Lower leg skin (tissue), 4 donors: ENCODE measurements at regions of chr3 and their contacts with region 1.

Region 1: DNA sequence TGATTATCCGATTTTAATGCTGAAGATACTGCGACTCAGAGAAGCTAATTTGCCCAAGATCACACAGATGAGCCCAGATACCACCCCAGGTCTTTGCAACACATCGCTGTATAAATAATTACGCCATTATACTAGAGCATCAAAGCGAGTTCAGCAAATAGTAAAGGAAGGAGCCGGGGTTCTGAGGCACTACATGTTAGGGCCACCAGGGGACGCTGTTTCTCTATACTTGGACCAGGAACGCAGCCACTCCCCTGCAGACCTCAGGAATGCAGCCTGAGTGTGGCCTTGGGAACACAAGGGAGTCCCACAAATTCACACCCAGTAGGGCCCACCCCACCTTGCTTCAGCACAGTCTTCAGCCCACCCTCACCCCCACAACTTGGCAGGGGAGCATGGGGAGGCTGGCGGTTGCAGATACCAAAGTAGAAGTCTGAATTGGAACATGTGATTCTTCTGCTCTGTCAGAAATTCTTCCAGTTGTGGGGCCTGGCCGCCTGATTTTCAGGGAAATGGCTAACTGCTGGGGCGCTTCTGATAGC is 57.8 kb upstream of the RYK start:
- DNase-seq: peak; percentile 90 to 98
- H3K4me3 ChIP-seq: no peak overlapping the region
- CTCF ChIP-seq: peak in 1 of 3 donors; percentile 94
- POLR2A ChIP-seq: no peak

Region 2: DNA sequence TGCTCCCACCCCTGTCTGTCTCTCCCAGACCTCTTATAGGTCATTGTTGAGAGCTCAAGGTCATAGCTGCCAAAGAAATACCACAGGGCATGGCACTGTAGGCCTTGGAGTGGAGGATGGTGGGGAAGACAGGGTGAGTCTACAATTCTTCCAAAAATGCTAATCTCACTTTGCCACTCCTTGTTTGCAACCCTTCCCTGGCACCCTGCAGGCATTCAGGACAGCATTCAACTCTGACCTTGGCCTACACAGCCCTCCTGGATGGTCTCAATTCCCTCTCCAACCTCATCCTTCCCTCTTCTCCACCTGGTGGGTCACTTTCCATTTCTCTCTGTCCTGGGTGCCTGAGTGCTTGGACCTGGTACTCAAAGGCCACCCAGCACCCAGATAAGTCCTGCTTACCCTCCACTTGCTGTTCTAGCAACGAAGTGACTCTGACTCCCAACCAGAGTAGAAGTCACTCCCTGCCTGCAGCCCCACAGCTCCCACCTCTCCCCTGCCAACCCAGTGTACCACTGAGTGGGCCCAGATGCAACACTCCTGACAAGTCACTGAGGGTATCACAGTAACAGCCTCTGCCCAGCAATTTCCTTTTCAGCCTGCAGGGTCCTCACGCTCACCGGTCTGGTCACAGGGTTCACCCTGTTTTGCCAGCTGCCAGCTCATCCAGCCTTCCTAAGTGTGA is 29.2 kb after region 1 on chr3:
- intact Hi-C with region 1: no loop called
- DNase-seq: peak in 1 of 2 donors; percentile 54
- H3K4me3 ChIP-seq: no peak overlapping the region
- CTCF ChIP-seq: no peak
- POLR2A ChIP-seq: no peak

Region 3: DNA sequence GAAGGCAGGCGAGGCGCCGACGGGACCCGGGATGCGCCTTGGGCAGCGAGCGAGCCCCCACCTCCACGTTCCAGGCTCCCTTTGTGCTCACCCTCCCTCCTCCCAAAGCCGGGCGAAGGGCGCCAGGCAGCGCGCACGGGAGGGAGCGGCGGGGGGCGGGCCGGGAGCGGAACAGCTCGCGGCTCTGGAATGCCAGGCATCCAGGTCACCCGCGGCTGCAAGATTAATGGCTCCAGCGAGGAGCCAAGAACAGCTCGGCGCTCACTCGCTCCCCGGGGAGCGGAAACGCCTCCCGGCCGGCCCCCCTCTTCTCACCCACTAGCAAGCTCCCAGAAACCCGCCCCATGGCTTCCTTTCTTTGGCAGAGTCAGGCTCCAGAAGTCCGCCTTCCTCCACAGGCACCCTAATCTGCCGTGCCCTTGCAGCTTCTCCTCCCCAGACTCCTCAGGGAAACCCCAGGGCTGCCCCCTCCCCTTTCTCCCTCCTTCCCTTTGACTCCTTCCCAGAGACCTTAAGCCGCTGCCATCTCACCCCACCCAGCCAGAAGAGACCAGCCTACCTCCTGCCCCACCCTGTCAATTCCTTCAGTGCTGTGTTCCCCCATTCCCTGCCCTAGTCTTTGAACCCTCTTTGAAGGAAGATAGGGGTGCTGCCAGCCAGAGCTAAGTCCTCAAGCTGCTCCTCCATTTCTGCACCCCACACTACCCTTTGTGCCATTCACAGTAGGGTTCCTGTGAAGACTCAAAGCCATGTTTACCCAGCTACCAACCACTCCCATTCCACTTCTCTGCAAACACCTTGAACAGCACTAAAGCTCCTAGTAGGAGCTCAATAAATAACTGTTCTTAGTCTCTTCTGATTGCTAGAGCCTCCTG is 55.9 kb after region 1 on chr3:
- intact Hi-C with region 1: loop called (anchors 5 kb)
- DNase-seq: peak; percentile 93 to 98
- H3K4me3 ChIP-seq: no peak overlapping the region
- CTCF ChIP-seq: no peak
- POLR2A ChIP-seq: no peak

Region 4: DNA sequence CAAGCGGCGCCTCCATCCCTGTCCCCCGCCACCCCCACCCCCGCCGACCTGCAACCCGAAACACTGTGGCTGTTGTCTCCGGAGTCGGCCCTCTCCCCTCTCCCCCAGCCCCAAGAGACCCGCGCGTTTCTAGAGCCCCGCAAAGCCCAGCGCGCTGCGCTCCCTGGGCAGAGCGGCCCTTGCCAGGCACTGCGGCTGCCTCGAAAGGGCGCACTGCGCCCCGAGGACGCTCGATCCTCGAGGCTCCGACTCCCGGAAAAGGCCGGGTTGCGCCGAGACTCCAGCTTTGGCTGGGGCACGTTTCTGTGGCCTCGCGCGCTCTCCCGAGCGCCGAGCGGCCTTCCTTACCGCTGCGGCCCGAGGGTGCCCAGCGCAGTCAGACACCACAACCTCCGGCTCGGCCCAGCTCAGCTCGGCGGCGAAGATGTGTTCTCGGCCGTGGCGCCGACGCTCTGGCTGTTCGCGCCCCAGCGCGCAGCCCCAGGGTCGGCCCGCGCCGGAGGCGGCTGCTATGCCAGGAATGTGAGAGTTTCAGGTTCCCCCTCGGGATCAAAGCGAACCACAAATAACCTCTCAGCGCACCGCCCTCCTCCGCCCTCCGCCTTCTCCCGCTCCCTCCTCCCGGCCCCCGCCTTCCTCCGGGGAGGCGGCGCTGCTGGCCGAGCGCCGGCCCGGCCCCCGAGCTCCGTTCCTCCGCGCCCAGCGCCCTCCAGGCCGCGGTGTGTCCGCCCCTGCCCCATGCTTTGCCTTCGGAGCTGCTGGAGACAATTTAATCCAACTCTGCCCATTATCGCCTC is 65.8 kb after region 1 on chr3 and contains the start of gene AMOTL2:
- intact Hi-C with region 1: loop called (anchors 2 kb)
- DNase-seq: peak; percentile 82 to 97
- H3K4me3 ChIP-seq: peak within 1 kb of the TSS; percentile 79
- CTCF ChIP-seq: no peak
- POLR2A ChIP-seq: peak in 1 of 2 donors; percentile 73
- total RNA-seq, gene AMOTL2: 97.1 to 151 (median 120) TPM

Region 5: GRCh38 chr3:134473868-134474546 is 165.6 kb after region 1 on chr3:
- intact Hi-C with region 1: loop called (anchors 5 kb)
- DNase-seq: peak; percentile 88 to 95
- H3K4me3 ChIP-seq: no peak overlapping the region
- CTCF ChIP-seq: no peak
- POLR2A ChIP-seq: no peak